Activated CD4-positive, alpha-beta T cell treated with anti-CD3 and anti-CD28 coated beads, Interleukin-2, amount 10 ng/mL, durations not matched to agents 24 days and 14 days (primary cell): ENCODE measurements at regions of chr7 and their contacts with region 1.

Region 1: GRCh38 chr7:138738551-138739335 is 37.6 kb upstream of the SVOPL start:
- DNase-seq: peak; percentile 94
- H3K4me3 Mint-ChIP-seq: no peak overlapping the region
- H3K27ac Mint-ChIP-seq: no peak overlapping the region
- H3K4me1 Mint-ChIP-seq: peaks cover 10% of the 10 kb centered on the region
- H3K27me3 Mint-ChIP-seq: peaks cover 7% of the 10 kb centered on the region

Region 2: GRCh38 chr7:138008547-138009349 is 730.0 kb before region 1 on chr7:
- intact Hi-C with region 1: loop called (anchors 5 kb)
- DNase-seq: peak; percentile 83
- H3K4me3 Mint-ChIP-seq: no peak overlapping the region
- H3K27ac Mint-ChIP-seq: peak overlapping the region; percentile 42
- H3K4me1 Mint-ChIP-seq: peaks cover 6% of the 10 kb centered on the region
- H3K27me3 Mint-ChIP-seq: peaks cover 7% of the 10 kb centered on the region

Region 3: DNA sequence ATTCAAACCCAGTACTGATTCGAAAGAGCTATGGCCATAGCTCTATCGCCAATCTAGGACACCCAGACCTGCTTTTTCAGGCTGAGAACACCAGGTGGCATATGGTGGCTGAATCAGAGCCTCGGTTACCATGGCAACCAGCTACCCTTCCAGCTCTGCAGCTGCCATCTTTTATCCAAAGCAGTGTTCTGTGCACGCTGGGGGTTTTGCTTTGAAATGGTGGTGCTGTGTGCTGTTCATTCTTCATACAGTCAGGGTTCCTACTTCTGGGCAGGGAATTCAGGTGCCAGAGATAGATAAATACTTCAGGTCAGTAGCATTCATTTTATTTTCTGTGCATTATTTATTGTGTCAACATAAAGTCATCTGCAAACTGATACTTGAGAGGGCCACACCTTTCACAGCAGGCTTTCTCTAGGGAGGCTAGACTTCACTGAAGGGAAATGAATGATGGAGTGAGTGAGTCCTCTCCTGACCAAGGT is 577.1 kb before region 1 on chr7:
- intact Hi-C with region 1: loop called (anchors 1 kb)
- DNase-seq: peak; percentile 92
- H3K4me3 Mint-ChIP-seq: no peak overlapping the region
- H3K27ac Mint-ChIP-seq: no peak overlapping the region
- H3K4me1 Mint-ChIP-seq: no peaks in the 10 kb centered on the region
- H3K27me3 Mint-ChIP-seq: peaks cover 2% of the 10 kb centered on the region

Region 4: DNA sequence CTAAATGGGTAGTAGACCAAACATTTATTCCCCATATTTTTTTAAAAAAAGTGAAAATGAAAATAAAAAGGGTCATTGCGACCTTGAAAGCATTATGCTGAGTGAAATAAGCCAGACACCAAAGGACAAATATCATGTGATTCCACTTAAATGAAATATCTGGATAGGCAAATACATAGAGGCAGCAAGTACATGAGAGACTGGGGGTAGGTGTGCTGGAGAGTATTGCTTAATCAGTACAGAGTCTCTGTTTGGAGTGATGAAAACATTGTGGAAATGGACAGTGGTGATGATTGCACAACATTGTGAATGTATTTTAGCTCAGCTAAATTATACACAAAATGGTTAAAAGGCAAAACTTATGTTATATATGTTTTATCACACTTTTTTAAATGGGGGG is 493.1 kb before region 1 on chr7:
- intact Hi-C with region 1: loop called (anchors 5 kb)
- DNase-seq: no peak
- H3K4me3 Mint-ChIP-seq: no peak overlapping the region
- H3K27ac Mint-ChIP-seq: no peak overlapping the region
- H3K4me1 Mint-ChIP-seq: no peaks in the 10 kb centered on the region
- H3K27me3 Mint-ChIP-seq: peaks cover 3% of the 10 kb centered on the region

Region 5: DNA sequence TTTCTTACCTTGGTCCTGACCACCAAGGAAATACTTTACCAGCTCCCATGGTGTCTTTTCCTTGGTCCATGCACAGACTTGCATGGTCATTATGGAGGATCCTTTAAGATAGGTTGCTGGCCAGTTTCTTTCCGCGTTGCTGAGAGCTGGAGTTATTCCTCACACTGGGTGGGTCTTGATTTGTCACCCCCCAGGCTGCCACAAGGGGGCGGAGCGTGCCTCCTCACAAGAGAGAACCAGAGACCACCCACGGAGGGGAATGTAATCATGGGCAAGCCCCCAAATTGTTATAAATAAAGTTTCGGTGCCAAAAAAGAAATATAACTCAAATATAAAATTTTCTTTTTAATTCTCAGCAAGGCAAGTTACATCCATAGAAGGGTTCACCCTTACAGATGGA is 289.2 kb before region 1 on chr7:
- intact Hi-C with region 1: loop called (anchors 1 kb)
- DNase-seq: peak; percentile 73
- H3K4me3 Mint-ChIP-seq: no peak overlapping the region
- H3K27ac Mint-ChIP-seq: no peak overlapping the region
- H3K4me1 Mint-ChIP-seq: no peaks in the 10 kb centered on the region
- H3K27me3 Mint-ChIP-seq: peaks cover 9% of the 10 kb centered on the region

Region 6: GRCh38 chr7:138459413-138460175 is 279.1 kb before region 1 on chr7:
- intact Hi-C with region 1: loop called (anchors 5 kb)
- DNase-seq: peak; percentile 99
- H3K4me3 Mint-ChIP-seq: peak overlapping the region; percentile 78
- H3K27ac Mint-ChIP-seq: peak overlapping the region; percentile 47
- H3K4me1 Mint-ChIP-seq: peaks cover 17% of the 10 kb centered on the region
- H3K27me3 Mint-ChIP-seq: peaks cover 2% of the 10 kb centered on the region

Region 7: DNA sequence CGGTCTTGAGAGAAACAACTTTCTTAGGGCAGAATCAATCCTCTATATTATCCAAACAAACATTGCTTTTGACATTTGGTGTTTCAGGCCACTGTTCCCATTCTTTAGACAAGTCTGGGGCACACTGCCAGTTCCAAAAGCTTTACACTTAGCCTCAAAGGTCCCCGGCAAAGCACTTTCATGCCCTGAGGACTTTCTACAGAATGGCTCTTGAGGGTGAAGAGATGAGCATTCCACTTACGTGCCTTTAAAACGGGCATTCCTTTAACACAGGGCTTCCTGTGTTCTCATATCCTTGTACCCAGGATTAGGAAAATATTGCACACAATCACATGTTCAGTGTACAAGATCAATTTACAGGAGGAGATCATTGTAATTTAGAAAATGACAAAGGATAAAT is 45.9 kb after region 1 on chr7:
- intact Hi-C with region 1: no loop called
- DNase-seq: no peak
- H3K4me3 Mint-ChIP-seq: no peak overlapping the region
- H3K27ac Mint-ChIP-seq: no peak overlapping the region
- H3K4me1 Mint-ChIP-seq: no peaks in the 10 kb centered on the region
- H3K27me3 Mint-ChIP-seq: peaks cover 3% of the 10 kb centered on the region